ENCODE measurements at regions of chr10 and their contacts with region 1.

Region 1: GRCh38 chr10:87861953-87862678 is 1.2 kb downstream of the KLLN start:
- DNase-seq: peak; percentile 98
- ATAC-seq: peak; percentile 91

Region 2: DNA sequence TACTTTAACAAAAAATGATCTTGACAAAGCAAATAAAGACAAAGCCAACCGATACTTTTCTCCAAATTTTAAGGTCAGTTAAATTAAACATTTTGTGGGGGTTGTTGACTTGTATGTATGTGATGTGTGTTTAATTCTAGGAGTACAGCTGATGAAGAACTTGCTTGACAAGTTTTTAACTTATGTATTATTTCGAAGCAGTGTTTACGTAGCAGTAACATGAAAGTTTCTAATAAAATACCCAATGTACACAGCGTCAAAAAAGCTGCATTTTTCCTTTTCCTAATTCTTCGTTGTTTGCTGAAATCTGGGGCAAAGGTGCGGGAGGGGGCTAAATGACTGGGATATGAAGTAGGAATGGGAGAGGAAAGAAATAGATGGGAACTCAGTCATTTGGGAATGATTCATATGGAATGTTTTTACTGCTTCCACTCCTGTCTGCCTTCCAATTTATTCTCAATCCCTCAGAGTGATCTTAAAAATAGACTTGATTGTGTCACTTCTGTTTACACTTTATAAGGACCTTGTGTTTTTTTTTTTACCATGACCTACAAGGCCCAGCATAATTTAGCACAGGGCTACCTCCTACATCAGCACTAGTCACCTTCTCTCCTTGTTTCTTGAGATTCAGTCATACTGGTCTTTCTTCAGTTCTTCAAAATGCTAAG is 99.1 kb after region 1 on chr10:
- intact Hi-C with region 1: loop called (anchors 5 kb)
- DNase-seq: no peak
- ATAC-seq: peak; percentile 73

Region 3: DNA sequence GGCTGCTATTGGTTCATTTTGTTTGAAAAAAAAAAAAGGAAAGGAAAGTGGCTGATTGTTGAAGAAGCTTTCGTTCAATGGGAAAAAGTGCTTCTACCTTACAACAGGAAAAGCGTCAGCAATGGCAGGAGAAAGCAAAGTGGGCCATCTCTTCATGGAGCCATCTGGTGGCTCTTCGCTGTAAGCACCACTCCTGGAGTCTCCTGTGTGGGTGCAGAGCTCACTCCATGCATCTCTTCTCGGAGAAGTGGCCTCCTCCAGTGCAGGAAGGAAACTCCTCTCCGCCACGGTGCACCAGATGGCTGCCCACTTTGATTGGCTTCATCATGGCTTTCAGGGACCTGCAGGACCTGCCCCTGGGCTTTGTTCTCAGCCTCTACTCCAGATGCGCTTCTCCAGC is 252.3 kb after region 1 on chr10:
- intact Hi-C with region 1: loop called (anchors 5 kb)
- DNase-seq: no peak
- ATAC-seq: peak; percentile 80

Region 4: DNA sequence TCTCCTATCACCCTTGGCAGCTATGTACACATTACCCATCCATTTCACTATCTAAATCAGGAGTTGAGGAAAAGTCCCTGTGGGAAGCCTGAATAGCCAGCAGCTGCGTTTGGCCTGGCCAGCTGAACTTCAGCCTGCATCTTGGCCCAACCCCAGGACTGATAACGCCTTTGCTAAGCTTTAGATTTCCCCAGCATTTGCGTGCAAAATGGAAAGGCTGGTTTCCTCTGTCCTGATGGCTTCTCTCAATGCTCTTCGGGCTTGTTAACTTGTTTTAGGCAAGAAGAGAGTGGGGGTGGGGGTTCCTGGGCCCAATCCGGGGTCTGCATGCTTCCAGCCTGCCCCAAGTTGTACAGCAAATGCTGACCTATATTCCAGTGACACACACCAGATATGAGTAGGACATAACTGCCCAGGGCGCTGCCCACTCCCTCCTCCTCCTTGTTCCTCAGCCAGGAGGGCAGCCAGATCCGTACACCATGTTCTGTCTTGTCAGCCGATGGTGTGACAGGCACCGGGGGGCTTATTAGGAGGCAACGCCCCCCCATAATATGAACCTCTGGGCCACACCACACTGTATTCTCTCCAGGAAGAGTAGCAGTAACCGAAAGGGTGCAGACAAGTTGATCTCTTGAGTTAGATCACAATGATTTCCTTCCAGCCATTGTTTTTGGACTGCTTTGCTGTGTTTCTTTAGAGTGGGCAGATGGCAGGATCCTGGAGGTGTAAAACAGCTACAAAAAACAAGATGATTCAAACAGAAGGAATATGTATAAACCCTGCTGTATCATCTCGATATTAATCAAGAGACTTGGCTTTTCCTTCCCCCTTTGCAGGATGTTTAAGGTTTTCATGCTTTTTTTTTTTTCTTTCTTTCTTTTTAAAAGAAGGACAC is 382.0 kb after region 1 on chr10:
- intact Hi-C with region 1: loop called (anchors 5 kb)
- DNase-seq: peak; percentile 86
- ATAC-seq: peak; percentile 94

Region 5: GRCh38 chr10:88546462-88546861 is 684.3 kb after region 1 on chr10:
- intact Hi-C with region 1: loop called (anchors 5 kb)
- DNase-seq: no peak
- ATAC-seq: no peak

Measured in Right ventricle myocardium inferior (tissue), 1 donor.